ENCODE measurements at regions of chr22 and their contacts with region 1.

Region 1: GRCh38 chr22:45309472-45310227 is at the start of gene FAM118A:
- DNase-seq: peak; percentile 100
- ATAC-seq: peak; percentile 86
- H3K4me3 Mint-ChIP-seq: peak within 1 kb of the TSS; percentile 85
- H3K27ac Mint-ChIP-seq: peak within 1 kb of the TSS; percentile 90
- H3K4me1 Mint-ChIP-seq: peaks cover 36% of the 10 kb centered on the region
- H3K27me3 Mint-ChIP-seq: no peaks in the 10 kb centered on the region
- CTCF ChIP-seq: no peak
- total RNA-seq, gene FAM118A: 49.7 and 59.3 TPM in 2 replicates

Region 2: DNA sequence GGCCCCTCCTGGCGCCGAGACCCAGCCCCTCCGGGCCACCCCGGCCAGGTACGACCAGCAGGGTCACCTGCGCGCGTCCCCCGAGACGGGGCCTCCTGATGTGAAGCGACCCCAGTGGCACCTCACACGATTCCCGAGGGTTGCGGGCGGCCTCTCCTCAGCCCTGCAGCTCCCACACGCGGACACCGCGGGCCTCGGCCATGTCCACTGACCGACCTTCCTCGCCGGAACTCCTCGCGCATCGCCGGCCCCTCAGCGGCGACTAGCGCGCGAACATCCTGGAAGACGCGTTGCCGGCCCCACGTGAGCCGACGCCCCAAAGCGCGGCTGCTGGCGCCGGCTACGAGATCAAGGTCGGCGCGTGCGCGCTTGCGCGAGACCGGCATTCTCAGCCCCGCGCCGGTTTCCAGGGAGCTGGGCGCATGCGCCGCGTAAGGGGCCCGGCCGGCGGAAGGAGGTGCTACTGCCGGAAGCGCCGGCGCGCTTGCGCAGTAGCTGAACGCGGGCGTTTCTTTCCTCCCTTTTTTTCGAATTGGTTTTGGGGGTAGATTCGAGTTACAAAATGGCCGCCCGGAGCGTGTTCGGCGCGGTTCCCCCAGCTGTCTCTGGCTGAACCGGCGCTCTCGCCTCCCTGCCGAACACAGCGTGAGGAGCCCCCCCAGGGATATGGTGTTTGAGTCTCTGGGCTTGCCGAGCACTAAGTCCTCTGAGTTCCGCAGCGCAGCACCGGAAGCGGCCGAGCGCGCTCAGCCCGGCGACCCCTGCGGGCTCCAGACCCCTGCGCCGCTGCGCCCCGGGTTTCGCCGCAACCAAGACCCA is 146.0 kb before region 1 on chr22 and contains the start of gene NUP50:
- CTCF ChIA-PET with region 1: no interaction called
- POLR2A ChIA-PET with region 1: no interaction called
- intact Hi-C with region 1: loop called (anchors 5 kb)
- DNase-seq: peak; percentile 97
- ATAC-seq: peak; percentile 78
- H3K4me3 Mint-ChIP-seq: peak within 1 kb of the TSS; percentile 97
- H3K27ac Mint-ChIP-seq: peak within 1 kb of the TSS; percentile 90
- H3K4me1 Mint-ChIP-seq: peaks cover 38% of the 10 kb centered on the region
- H3K27me3 Mint-ChIP-seq: no peaks in the 10 kb centered on the region
- CTCF ChIP-seq: no peak
- total RNA-seq, gene NUP50: 91.2 and 112 TPM in 2 replicates

Region 3: GRCh38 chr22:45240810-45241631 is 68.6 kb before region 1 on chr22 and contains the start of gene KIAA0930:
- CTCF ChIA-PET with region 1: no interaction called
- POLR2A ChIA-PET with region 1: no interaction called
- intact Hi-C with region 1: loop called (anchors 1 kb)
- DNase-seq: peak; percentile 71
- ATAC-seq: peak; percentile 69
- H3K4me3 Mint-ChIP-seq: peak within 1 kb of the TSS; percentile 87
- H3K27ac Mint-ChIP-seq: peak within 1 kb of the TSS; percentile 88
- H3K4me1 Mint-ChIP-seq: peaks cover 60% of the 10 kb centered on the region
- H3K27me3 Mint-ChIP-seq: no peaks in the 10 kb centered on the region
- CTCF ChIP-seq: no peak
- total RNA-seq, gene KIAA0930: 39.5 and 42.2 TPM in 2 replicates

Region 4: GRCh38 chr22:45268958-45269844 is 40.4 kb before region 1 on chr22:
- CTCF ChIA-PET with region 1: no interaction called
- POLR2A ChIA-PET with region 1: no interaction called
- intact Hi-C with region 1: loop called (anchors 1 kb)
- DNase-seq: peak; percentile 94
- ATAC-seq: peak; percentile 96
- H3K4me3 Mint-ChIP-seq: peak overlapping the region; percentile 85
- H3K27ac Mint-ChIP-seq: no peak overlapping the region
- H3K4me1 Mint-ChIP-seq: peaks cover 20% of the 10 kb centered on the region
- H3K27me3 Mint-ChIP-seq: peaks cover 4% of the 10 kb centered on the region
- CTCF ChIP-seq: no peak

Region 5: GRCh38 chr22:45284705-45285262 is 24.9 kb before region 1 on chr22 and contains the start of gene UPK3A:
- CTCF ChIA-PET with region 1: interaction called, 4 read pairs
- POLR2A ChIA-PET with region 1: interaction called, 20 read pairs
- intact Hi-C with region 1: loop called (anchors 1 kb)
- DNase-seq: peak; percentile 84
- ATAC-seq: peak; percentile 86
- H3K4me3 Mint-ChIP-seq: peak within 1 kb of the TSS; percentile 54
- H3K27ac Mint-ChIP-seq: peak within 1 kb of the TSS; percentile 61
- H3K4me1 Mint-ChIP-seq: peaks cover 57% of the 10 kb centered on the region
- H3K27me3 Mint-ChIP-seq: no peaks in the 10 kb centered on the region
- CTCF ChIP-seq: no peak
- total RNA-seq, gene UPK3A: 1.4 and 1.6 TPM in 2 replicates

Region 6: DNA sequence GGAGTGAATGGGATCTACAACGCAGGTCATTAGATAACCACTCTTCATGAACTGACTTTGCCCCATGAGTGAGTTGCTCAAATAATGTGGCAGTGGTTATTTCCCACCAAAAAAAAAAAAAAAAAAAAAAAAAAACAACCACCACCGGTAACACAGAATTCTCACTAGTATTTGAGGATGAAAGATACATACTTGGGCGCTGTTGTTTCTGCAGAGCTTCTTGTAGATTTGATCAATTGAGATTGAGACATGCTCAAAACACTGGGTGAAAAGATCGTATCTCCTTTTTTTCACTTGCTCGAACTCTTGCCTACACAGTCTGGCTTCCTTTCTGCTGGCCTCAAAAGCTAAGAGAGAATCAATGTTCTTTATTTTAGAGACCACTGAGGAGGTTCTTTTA is 44.1 kb after region 1 on chr22:
- CTCF ChIA-PET with region 1: no interaction called
- POLR2A ChIA-PET with region 1: no interaction called
- intact Hi-C with region 1: no loop called
- DNase-seq: no peak
- ATAC-seq: no peak
- H3K4me3 Mint-ChIP-seq: no peak overlapping the region
- H3K27ac Mint-ChIP-seq: no peak overlapping the region
- H3K4me1 Mint-ChIP-seq: no peaks in the 10 kb centered on the region
- H3K27me3 Mint-ChIP-seq: no peaks in the 10 kb centered on the region
- CTCF ChIP-seq: no peak

Region 7: GRCh38 chr22:45413368-45414211 is 103.9 kb after region 1 on chr22 and contains the starts of genes RIBC2 and SMC1B:
- CTCF ChIA-PET with region 1: no interaction called
- POLR2A ChIA-PET with region 1: no interaction called
- intact Hi-C with region 1: loop called (anchors 1 kb)
- DNase-seq: peak; percentile 59
- ATAC-seq: peak; percentile 82
- H3K4me3 Mint-ChIP-seq: peak within 1 kb of the TSS; percentile 79
- H3K27ac Mint-ChIP-seq: peak within 1 kb of the TSS; percentile 50
- H3K4me1 Mint-ChIP-seq: peaks cover 13% of the 10 kb centered on the region
- H3K27me3 Mint-ChIP-seq: peaks cover 2% of the 10 kb centered on the region
- CTCF ChIP-seq: no peak
- total RNA-seq, gene RIBC2: 0.31 and 0.32 TPM in 2 replicates
- total RNA-seq, gene SMC1B: 0.13 TPM in 1 of 2 replicates, not detected in the other

Measured in activated B cell treated with CpG ODN at 0.5 μM for 24 hours (primary cell).